Right cardiac atrium (tissue), 5 donors: ENCODE measurements at regions of chr4 and their contacts with region 1.

Region 1: DNA sequence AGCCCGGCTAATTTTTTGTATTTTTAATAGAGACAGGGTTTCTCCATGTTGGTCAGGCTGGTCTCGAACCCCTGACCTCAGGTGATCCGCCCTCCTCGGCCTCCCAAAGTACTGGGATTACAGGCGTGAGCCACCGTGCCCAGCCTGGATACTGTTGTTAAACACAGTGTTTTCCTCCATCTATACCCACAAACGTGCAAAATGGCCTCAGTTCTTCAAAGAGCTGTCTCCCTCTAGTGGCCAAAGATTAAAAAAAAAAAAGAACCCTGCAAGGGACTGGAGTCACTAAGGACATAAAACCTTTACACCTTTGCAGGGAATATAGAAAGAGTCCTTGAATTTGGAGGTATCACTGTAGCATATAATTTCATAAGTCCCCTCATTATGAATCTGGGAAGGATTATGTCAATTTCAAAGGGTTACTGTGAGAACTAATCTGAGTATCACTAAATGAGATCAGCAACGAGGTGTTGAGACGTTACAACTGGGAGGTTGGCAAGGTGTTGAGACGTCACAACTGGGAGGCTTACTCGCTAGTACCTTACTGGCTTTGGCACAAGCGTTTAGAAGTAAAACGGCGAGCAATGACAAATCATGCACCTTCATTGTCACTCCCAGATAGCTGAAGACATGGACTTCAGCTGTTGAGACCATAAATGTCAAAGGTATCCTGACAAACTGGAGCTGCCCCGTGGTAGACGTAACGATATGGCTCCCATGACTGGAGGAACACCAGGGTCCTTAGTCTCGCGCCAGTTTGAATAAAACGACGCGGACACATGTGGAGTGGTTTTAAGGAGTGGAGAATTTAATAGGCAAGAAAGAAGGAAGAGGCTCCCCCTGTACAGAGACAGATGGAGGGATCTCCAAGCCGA is 33.4 kb upstream of the ENPP6 start:
- DNase-seq: no peak
- ATAC-seq: peak in 1 of 2 donors; percentile 63
- H3K4me3 ChIP-seq: no peak overlapping the region
- H3K27ac ChIP-seq: no peak overlapping the region
- H3K4me1 ChIP-seq: no peaks in the 10 kb centered on the region
- H3K27me3 ChIP-seq: no peaks in the 10 kb centered on the region

Region 2: GRCh38 chr4:184544788-184545409 is 293.9 kb after region 1 on chr4:
- intact Hi-C with region 1: loop called in 1 of 4 experiments (anchors 10 kb)
- DNase-seq: peak in 1 of 3 donors; percentile 47
- ATAC-seq: peak in 1 of 2 donors; percentile 70
- H3K4me3 ChIP-seq: no peak overlapping the region
- H3K27ac ChIP-seq: no peak overlapping the region
- H3K4me1 ChIP-seq: no peaks in the 10 kb centered on the region
- H3K27me3 ChIP-seq: no peaks in the 10 kb centered on the region